Naive thymus-derived CD8-positive, alpha-beta T cell (primary cell): ENCODE measurements at regions of chr12 and their contacts with region 1.

Region 1: DNA sequence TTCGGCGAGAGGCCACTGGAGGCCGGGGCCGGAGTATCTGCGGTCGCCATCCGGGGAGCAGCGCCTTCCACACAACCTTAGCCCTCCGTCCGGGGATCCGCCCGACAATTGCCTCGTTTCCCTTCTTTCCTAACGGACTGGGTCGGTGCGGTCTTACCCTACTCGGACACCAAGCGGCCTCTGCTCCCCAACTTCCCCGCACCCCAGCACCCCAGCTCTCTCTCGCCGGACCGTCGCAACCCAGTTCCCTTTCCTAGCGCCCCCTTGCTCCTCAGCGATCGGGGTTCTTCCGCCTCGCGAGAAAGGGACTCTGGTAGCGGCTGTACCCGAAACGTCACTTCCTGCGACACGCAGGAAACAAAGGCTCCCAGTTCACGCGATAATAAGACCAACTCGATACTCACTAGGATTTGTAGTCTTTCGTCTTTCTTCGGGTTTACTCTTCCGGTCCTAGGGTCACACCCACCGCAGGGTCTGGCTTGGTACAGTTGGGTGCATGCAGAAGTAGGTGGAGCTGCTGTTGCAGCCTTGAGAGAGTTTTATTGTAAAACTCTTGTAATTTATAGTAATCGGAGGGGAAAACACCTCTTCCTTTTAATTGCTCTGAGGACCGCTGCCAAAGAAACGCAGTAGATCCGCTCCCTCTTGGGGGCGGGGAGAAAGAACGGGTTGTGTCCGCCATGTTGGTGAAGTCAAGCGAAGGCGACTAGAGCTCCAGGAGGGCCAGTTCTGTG is at the start of gene ZFC3H1:
- DNase-seq: peak; percentile 75 to 97 (median 94)
- ATAC-seq: peak; percentile 83
- H3K4me3 Mint-ChIP-seq: peak within 1 kb of the TSS; percentile 95 to 100 (median 99)
- H3K27ac Mint-ChIP-seq: peak within 1 kb of the TSS; percentile 95 to 100 (median 99)
- H3K4me1 Mint-ChIP-seq: peaks cover 24 to 59% (median 53%) of the 10 kb centered on the region in 4 donors
- H3K27me3 Mint-ChIP-seq: no peaks in the 10 kb centered on the region
- polyA plus RNA-seq, gene ZFC3H1: 19.1 to 28.5 (median 21.3) TPM

Region 2: DNA sequence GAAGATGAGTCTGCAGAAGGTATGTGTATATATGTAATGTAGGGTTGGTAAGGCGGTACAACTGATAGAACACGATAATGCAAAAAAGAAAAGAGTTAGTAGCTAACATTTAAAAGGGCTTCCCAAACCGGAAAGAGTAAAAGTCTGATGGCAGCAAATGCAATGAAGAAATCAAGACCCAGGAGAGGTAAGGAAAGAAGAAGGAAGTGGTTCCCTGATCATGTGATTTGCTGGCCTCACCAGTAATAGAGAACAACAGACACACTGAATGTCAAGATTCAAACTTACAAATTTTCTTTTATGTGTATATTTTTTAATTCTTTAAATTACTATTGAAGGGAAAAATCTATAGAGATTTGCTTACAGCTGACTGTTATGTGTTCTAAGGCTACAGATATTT is 18.5 kb before region 1 on chr12:
- POLR2A ChIA-PET with region 1: interaction called, 11 read pairs
- DNase-seq: no peak
- ATAC-seq: no peak
- H3K4me3 Mint-ChIP-seq: no peak overlapping the region
- H3K27ac Mint-ChIP-seq: peak overlapping the region in 8 of 10 donors; percentile 4 to 93 (median 61)
- H3K4me1 Mint-ChIP-seq: peaks cover 7 to 36% (median 25%) of the 10 kb centered on the region in 4 donors
- H3K27me3 Mint-ChIP-seq: no peaks in the 10 kb centered on the region

Region 3: GRCh38 chr12:71685914-71686665 is 22.4 kb after region 1 on chr12 and contains the start of gene TMEM19:
- POLR2A ChIA-PET with region 1: interaction called, 213 read pairs
- DNase-seq: peak; percentile 76 to 92 (median 83)
- ATAC-seq: peak; percentile 91
- H3K4me3 Mint-ChIP-seq: peak within 1 kb of the TSS; percentile 89 to 100 (median 94)
- H3K27ac Mint-ChIP-seq: peak within 1 kb of the TSS; percentile 87 to 98 (median 94)
- H3K4me1 Mint-ChIP-seq: peaks cover 10 to 45% (median 28%) of the 10 kb centered on the region in 4 donors
- H3K27me3 Mint-ChIP-seq: no peaks in the 10 kb centered on the region
- polyA plus RNA-seq, gene TMEM19: 40.1 to 53.8 (median 43.5) TPM

Region 4: DNA sequence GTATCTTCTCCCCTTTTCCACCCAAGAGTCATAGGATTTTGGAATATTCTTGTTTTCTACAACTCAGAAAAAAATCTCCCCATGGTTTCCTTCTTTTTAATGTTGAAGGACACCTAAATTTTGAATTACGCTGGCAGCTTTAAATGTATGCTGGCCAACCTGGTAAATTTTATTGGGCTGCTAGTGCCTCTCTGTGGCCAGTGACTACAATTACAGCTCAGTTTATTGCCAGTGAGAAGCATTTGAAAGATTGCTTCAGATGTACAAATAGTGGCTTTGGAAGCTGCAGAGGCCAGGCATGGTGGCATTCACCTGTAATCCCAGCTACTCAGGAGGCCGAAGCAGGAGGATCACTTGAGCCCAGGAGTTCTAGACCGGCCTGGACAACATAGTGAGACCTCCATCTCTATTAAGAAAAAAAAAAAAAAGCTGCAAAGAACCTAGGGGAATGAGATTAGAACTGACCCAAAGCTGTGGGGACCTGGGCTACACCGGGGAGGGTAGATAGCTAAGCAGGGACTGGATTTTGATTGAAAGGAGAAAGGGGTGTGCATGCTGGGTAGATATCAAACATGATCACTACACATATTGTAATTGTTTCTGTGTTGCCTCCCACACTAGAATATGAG is 83.4 kb after region 1 on chr12:
- POLR2A ChIA-PET with region 1: interaction called, 24 read pairs
- DNase-seq: peak; percentile 7 to 71 (median 52)
- ATAC-seq: peak; percentile 89 to 94
- H3K4me3 Mint-ChIP-seq: no peak overlapping the region
- H3K27ac Mint-ChIP-seq: no peak overlapping the region
- H3K4me1 Mint-ChIP-seq: no peaks in the 10 kb centered on the region
- H3K27me3 Mint-ChIP-seq: peaks cover 5 to 16% (median 11%) of the 10 kb centered on the region in 5 donors

Region 5: DNA sequence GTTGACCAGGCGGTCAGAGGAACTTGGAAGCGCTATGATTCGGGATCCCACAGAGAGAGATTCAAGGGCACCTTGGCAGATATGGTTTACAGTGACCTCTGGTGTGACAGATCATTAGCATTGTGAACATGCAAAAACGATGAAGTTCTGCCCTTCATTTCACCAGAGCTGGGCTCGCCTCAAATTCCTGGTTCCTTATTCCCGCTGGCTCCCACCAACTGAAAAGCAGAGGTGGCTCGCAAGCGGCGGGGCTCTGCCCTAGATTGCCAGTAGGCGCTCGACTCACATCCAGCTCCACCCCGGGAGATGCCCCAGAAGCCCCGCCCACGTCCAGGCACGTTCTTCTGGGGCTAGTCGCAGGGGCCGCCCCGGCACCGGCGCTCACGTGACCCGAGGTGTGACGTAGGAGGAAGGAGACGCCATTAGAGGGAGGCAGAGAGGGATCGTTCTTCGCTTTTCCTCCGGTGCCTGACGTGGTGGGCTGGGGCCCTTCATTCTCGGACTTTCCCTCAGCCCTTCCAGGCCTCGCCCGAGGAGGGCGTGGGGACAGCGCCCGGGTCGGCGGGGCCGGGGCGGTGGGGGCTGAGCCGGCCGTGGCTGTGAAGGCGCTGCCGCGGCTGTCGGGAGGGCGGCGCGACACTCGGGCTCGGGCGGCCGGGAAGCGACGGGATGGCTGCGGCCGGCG is 90.9 kb after region 1 on chr12 and contains the start of gene RAB21:
- POLR2A ChIA-PET with region 1: interaction called, 39 read pairs
- DNase-seq: peak; percentile 97 to 99 (median 98)
- ATAC-seq: peak; percentile 91
- H3K4me3 Mint-ChIP-seq: peak within 1 kb of the TSS; percentile 88 to 96 (median 94)
- H3K27ac Mint-ChIP-seq: peak within 1 kb of the TSS; percentile 94 to 98 (median 98)
- H3K4me1 Mint-ChIP-seq: peaks cover 16 to 51% (median 45%) of the 10 kb centered on the region in 4 donors
- H3K27me3 Mint-ChIP-seq: peaks cover 0 to 8% (median 2%) of the 10 kb centered on the region in 5 donors
- polyA plus RNA-seq, gene RAB21: 22.3 to 41.0 (median 34.7) TPM

Region 6: DNA sequence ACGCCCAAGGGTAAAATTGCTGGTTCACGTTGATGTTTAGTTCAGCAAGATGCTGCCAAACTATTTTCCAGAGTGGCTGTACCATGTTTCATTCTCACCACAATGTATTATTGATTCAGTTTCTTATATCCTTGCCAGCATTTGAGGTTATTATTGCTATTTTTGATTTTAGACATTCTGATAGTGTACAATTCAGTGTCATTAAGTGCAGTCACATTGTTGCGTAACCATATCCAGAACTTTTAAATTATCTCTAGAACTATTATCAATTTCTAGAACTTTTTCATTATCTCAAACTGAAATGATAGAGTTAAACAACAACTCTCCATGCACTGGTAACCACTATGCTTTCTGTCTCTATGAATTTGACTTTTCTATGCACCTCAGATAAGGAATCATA is 165.1 kb after region 1 on chr12:
- POLR2A ChIA-PET with region 1: no interaction called
- DNase-seq: no peak
- ATAC-seq: no peak
- H3K4me3 Mint-ChIP-seq: no peak overlapping the region
- H3K27ac Mint-ChIP-seq: no peak overlapping the region
- H3K4me1 Mint-ChIP-seq: no peaks in the 10 kb centered on the region
- H3K27me3 Mint-ChIP-seq: peaks cover 0 to 26% (median 8%) of the 10 kb centered on the region in 5 donors

Region 7: GRCh38 chr12:71840231-71840847 is 176.6 kb after region 1 on chr12:
- POLR2A ChIA-PET with region 1: interaction called, 28 read pairs
- DNase-seq: peak in 3 of 10 donors; percentile 5 to 62 (median 28)
- ATAC-seq: peak; percentile 20 to 42
- H3K4me3 Mint-ChIP-seq: peak overlapping the region; percentile 86 to 100 (median 94)
- H3K27ac Mint-ChIP-seq: peak overlapping the region; percentile 95 to 100 (median 98)
- H3K4me1 Mint-ChIP-seq: peaks cover 24 to 52% (median 45%) of the 10 kb centered on the region in 4 donors
- H3K27me3 Mint-ChIP-seq: peaks cover 0 to 1% (median 0%) of the 10 kb centered on the region in 5 donors